Activated CD4-positive, alpha-beta T cell treated with anti-CD3 and anti-CD28 coated beads, Interleukin-2, amount 10 ng/mL, durations not matched to agents 24 days and 14 days (primary cell): ENCODE measurements at regions of chr19 and their contacts with region 1.

Region 1: DNA sequence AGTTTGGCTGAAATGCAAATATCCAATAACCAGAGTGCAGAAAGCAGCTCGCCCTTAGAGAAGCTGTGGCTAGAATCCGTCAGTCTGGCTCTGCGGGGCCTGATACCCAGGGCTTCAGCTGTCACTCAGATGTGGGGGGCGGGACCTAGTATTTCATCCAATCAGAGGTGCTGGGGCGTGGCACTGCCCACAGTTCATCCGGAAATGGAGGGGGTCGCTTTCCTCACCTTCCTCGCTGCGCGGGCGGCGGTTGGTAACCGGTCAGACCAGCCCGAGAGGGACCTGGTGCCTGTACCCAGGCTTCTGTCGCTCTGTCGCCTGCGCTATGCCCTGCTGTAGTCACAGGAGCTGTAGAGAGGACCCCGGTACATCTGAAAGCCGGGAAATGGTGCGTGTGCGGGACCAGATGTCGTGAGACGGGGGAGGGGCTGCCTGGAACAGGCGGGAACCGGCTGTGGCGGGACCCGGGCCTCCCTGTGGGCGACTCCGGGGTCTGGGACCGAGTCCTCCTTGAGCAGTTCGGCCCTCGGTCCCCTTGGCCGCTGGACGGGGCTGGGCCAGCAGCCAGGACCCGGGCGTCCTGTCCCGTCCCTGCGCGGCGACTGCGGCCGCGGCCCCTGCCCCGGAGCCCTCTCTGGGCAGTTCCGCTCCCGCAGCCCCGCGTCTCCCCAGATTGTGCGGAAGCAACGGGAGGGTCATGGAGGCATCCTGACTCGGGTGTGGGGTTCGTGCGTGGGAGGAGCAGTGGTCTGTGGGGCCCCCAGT is at the start of gene ZNF700:
- DNase-seq: peak; percentile 98
- H3K4me3 Mint-ChIP-seq: peak within 1 kb of the TSS; percentile 93
- H3K27ac Mint-ChIP-seq: peak within 1 kb of the TSS; percentile 97
- H3K4me1 Mint-ChIP-seq: peaks cover 30% of the 10 kb centered on the region
- H3K27me3 Mint-ChIP-seq: no peaks in the 10 kb centered on the region
- total RNA-seq, gene ZNF700: 12.6 and 13.4 TPM in 2 replicates

Region 2: GRCh38 chr19:11798391-11799330 is 126.4 kb before region 1 on chr19 and contains the start of gene ZNF491:
- intact Hi-C with region 1: loop called (anchors 1 kb)
- DNase-seq: peak; percentile 91
- H3K4me3 Mint-ChIP-seq: peak within 1 kb of the TSS; percentile 84
- H3K27ac Mint-ChIP-seq: peak within 1 kb of the TSS; percentile 84
- H3K4me1 Mint-ChIP-seq: peaks cover 9% of the 10 kb centered on the region
- H3K27me3 Mint-ChIP-seq: no peaks in the 10 kb centered on the region
- total RNA-seq, gene ZNF491: 0.12 and 0.68 TPM in 2 replicates

Region 3: GRCh38 chr19:11964858-11965645 is 40.0 kb after region 1 on chr19 and contains the start of gene ZNF763:
- intact Hi-C with region 1: loop called (anchors 2 kb)
- DNase-seq: peak; percentile 93
- H3K4me3 Mint-ChIP-seq: peak within 1 kb of the TSS; percentile 83
- H3K27ac Mint-ChIP-seq: peak within 1 kb of the TSS; percentile 78
- H3K4me1 Mint-ChIP-seq: peaks cover 16% of the 10 kb centered on the region
- H3K27me3 Mint-ChIP-seq: no peaks in the 10 kb centered on the region
- total RNA-seq, gene ZNF763: 0.31 and 0.51 TPM in 2 replicates

Region 4: GRCh38 chr19:12052497-12053169 is 127.6 kb after region 1 on chr19 and contains the start of gene ZNF878:
- intact Hi-C with region 1: loop called (anchors 10 kb)
- DNase-seq: peak; percentile 76
- H3K4me3 Mint-ChIP-seq: peak within 1 kb of the TSS; percentile 83
- H3K27ac Mint-ChIP-seq: peak within 1 kb of the TSS; percentile 62
- H3K4me1 Mint-ChIP-seq: peaks cover 5% of the 10 kb centered on the region
- H3K27me3 Mint-ChIP-seq: peaks cover 2% of the 10 kb centered on the region
- total RNA-seq, gene ZNF878: 0.21 and 0.49 TPM in 2 replicates

Region 5: DNA sequence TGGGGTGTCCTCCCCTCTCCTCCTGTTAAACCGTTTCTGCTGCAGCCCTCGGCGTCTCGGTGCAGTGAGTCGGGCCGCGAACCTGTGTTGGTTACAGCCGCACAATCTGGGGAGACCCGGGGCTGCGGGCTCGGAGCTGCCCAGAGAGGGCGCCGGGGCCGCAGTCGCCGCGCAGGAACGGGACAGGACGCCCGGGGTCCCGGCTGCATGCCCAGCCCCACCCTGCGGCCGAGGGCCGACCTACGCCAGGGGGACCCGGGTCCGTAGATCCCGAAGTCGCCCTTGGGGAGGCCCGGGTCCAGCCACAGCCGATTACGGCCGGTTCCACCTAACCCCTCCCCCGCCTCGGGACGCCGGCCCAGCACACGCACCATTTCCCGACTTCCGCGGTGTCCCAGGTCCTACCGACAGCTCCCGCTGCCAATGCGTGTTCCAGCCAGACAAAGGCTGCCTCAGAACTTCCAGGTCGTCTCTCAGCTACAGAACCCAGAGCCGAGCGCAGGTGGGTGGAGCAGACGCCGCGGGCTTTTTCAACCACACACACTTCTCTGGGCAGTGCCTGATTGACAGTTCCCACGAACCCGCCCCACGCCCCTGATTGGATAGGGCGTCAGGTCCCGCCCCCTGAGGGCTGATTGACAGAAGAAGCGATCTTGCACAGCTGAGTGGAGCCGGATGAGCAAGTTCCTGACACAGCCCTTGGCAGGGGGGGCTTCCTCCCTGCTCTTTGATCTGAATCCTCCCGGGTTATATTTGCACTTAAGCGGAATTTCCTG is 515.7 kb after region 1 on chr19 and contains the start of gene ZNF443:
- intact Hi-C with region 1: loop called (anchors 5 kb)
- DNase-seq: peak; percentile 100
- H3K4me3 Mint-ChIP-seq: peak within 1 kb of the TSS; percentile 98
- H3K27ac Mint-ChIP-seq: peak within 1 kb of the TSS; percentile 92
- H3K4me1 Mint-ChIP-seq: peaks cover 11% of the 10 kb centered on the region
- H3K27me3 Mint-ChIP-seq: no peaks in the 10 kb centered on the region
- total RNA-seq, gene ZNF443: 4.8 and 5.7 TPM in 2 replicates